PC-9 (cell line): ENCODE measurements at regions of chr20 and their contacts with region 1.

Region 1: DNA sequence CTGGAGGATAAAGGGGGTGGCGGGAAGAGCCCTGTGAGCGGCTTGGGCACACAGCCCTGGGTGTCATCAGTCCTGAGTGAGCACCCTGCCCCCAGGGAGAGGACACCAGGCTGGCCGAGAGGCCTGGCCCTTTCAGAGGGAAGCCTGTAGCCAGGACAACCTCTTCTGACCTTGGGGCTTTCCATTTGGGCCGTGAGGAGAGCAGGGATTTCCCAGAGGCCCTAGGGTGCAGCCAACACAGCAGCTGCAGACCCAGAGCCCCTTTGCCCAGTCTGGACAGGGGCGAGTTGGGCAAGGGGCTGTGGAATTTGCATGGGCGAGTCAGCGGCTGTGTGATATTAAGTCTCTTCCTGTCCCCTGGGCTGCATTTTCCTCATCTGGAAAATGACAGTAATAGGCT is 6.3 kb downstream of the MAP1LC3A start:
- DNase-seq: no peak
- H3K4me3 ChIP-seq: no peak overlapping the region
- H3K27ac ChIP-seq: no peak overlapping the region
- H3K4me1 ChIP-seq: no peaks in the 10 kb centered on the region
- H3K27me3 ChIP-seq: no peaks in the 10 kb centered on the region
- CTCF ChIP-seq: no peak

Region 2: DNA sequence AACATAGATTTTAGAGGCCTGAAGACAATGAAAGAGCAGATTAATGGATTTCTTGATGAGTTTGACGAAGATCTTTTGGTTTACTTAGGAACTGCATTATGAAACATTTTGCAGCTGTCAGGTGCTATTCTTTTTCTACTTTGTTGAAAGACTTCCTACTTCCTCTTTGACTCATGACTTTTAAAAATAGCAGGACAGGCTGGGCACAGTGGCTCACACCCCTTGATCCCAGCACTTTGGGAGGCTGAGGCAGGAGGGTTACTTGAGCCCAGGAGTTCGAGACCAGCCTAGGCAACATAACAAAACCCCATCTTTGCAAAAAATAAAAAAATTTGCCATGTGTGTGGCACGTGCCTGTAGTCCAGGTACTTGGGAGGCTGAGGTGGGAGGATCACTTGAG is 149.8 kb before region 1 on chr20:
- CTCF ChIA-PET with region 1: no interaction called
- POLR2A ChIA-PET with region 1: no interaction called
- intact Hi-C with region 1: no loop called
- DNase-seq: no peak
- H3K4me3 ChIP-seq: no peak overlapping the region
- H3K27ac ChIP-seq: peak overlapping the region; percentile 47
- H3K4me1 ChIP-seq: peaks cover 24% of the 10 kb centered on the region; the same call in 1 of the 2 replicates
- H3K27me3 ChIP-seq: no peaks in the 10 kb centered on the region
- CTCF ChIP-seq: no peak

Region 3: DNA sequence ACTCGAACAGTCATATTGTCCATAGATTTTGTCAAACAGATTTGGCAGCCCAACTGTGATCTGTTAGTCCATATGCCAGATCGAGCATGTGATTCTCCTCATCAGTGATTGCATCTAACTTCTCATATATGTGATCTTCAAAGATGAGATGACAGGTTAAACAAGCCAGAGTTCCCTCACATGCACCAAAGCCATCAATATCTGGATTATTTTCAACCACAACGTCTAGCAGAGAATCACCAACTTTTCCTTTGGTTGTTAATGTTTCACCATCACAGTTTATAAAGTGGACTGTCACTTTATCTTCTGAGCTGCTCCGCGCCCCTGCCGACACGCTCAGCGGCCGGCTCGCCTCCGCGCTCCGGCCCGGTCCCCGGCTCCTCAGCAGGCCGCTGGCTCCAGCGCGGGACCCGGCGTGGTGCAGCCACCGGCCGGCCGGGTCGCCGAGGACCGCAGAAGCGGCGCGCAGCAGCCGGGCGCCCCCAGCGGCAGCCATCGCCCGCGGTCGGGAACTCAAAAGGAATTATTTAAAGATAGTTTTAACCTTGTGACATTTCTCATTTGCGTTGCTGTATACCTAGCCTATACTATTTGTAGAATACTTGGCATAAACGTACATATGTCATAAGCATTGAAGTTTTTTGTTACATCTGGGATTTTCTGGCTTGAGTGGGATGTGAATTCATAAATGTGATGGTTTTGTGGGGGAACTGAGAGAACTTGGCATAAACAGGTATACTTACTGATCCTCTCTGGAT is 88.7 kb before region 1 on chr20:
- CTCF ChIA-PET with region 1: no interaction called
- POLR2A ChIA-PET with region 1: no interaction called
- intact Hi-C with region 1: no loop called
- DNase-seq: no peak
- H3K4me3 ChIP-seq: no peak overlapping the region
- H3K27ac ChIP-seq: no peak overlapping the region
- H3K4me1 ChIP-seq: peaks cover 8% of the 10 kb centered on the region; the same call in 1 of the 2 replicates
- H3K27me3 ChIP-seq: no peaks in the 10 kb centered on the region
- CTCF ChIP-seq: no peak

Region 4: DNA sequence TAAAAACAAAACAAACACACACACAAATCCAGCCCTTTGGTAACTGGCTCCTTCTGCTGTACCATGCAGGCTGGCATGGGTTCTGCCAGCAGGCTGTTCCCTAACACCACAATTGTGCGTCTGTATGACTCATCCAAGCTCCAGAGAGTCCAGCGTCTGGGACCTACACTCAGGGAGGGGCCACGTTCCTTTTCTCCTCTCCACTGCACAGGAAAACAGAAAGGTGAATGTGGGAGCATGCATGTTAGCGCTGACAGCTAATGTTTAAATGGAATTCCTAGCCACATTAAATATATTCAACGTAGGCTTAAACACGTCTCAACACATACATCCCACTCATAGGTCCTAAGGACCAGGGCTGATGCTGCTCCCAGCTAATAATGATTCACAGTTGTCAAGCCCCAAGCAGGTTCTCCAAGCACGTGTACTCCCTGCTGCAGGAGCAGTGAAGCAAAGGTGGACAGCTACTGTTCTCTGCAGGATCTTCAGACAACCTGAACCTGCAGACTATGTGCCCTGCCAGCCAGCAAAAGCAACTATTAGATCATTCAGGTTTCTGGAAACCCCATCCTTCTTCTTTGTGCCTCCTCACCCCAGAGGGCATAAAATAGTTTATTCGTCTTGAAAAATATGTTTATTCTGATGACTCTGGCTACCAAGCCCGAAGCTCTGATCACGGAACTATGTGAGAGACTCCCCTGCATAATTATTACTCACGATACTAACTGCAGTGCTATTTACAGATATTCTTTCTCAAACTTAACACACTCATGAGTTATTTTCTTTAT is 14.6 kb after region 1 on chr20:
- CTCF ChIA-PET with region 1: no interaction called
- POLR2A ChIA-PET with region 1: no interaction called
- intact Hi-C with region 1: no loop called
- DNase-seq: peak; percentile 61 to 78
- H3K4me3 ChIP-seq: no peak overlapping the region
- H3K27ac ChIP-seq: no peak overlapping the region
- H3K4me1 ChIP-seq: peaks cover 31% of the 10 kb centered on the region
- H3K27me3 ChIP-seq: no peaks in the 10 kb centered on the region
- CTCF ChIP-seq: peak; percentile 79

Region 5: DNA sequence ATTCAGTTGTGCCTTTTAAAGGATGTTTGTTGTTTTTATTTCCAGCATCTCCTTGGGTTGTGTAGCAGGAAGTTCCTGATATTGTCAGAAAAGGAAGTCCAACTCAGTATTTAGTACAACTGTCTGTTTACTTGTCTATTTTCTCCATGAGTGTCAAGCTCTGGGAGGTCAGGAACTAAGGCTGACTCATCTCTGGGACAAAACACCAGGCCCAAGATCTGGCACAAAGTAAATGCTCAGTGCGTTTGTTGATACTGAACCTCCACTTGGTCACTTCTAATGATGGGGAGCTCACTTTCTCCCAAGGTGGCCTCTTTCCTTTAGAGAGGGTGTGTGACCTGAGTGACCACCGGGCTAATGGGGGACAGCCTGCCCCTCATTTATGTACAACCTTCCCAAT is 124.7 kb after region 1 on chr20:
- CTCF ChIA-PET with region 1: no interaction called
- POLR2A ChIA-PET with region 1: interaction called, 11 read pairs
- intact Hi-C with region 1: no loop called
- DNase-seq: peak in 1 of 2 experiments; percentile 56
- H3K4me3 ChIP-seq: no peak overlapping the region
- H3K27ac ChIP-seq: no peak overlapping the region
- H3K4me1 ChIP-seq: no peaks in the 10 kb centered on the region; the same call in 1 of the 2 replicates
- H3K27me3 ChIP-seq: no peaks in the 10 kb centered on the region
- CTCF ChIP-seq: no peak